HepG2 (cell line): ENCODE measurements at regions of chr3 and their contacts with region 1.

Region 1: GRCh38 chr3:149609595-149609994 is 48.2 kb downstream of the WWTR1 start:
- DNase-seq: peak; percentile 95
- ATAC-seq: peak; percentile 85
- H3K4me3 ChIP-seq: peak overlapping the region in 1 of 3 experiments; percentile 30; a peak in 1 of 6 replicates
- H3K27ac ChIP-seq: peak overlapping the region; percentile 89
- H3K4me1 ChIP-seq: peaks cover 100% of the 10 kb centered on the region
- H3K27me3 ChIP-seq: no peaks in the 10 kb centered on the region
- CTCF ChIP-seq: no peak
- EP300 ChIP-seq: peak in 1 of 2 experiments; percentile 91; a peak in 2 of 4 replicates
- POLR2A ChIP-seq: no peak
- RAD21 ChIP-seq: no peak

Region 2: GRCh38 chr3:149519912-149520311 is 89.7 kb before region 1 on chr3:
- CTCF ChIA-PET with region 1: no interaction called
- POLR2A ChIA-PET with region 1: no interaction called
- in situ Hi-C with region 1: no loop called
- intact Hi-C with region 1: no loop called
- DNase-seq: no peak
- ATAC-seq: no peak
- H3K4me3 ChIP-seq: no peak overlapping the region
- H3K27ac ChIP-seq: no peak overlapping the region
- H3K4me1 ChIP-seq: no peaks in the 10 kb centered on the region
- H3K27me3 ChIP-seq: no peaks in the 10 kb centered on the region
- CTCF ChIP-seq: no peak
- EP300 ChIP-seq: no peak
- POLR2A ChIP-seq: no peak
- RAD21 ChIP-seq: no peak

Region 3: DNA sequence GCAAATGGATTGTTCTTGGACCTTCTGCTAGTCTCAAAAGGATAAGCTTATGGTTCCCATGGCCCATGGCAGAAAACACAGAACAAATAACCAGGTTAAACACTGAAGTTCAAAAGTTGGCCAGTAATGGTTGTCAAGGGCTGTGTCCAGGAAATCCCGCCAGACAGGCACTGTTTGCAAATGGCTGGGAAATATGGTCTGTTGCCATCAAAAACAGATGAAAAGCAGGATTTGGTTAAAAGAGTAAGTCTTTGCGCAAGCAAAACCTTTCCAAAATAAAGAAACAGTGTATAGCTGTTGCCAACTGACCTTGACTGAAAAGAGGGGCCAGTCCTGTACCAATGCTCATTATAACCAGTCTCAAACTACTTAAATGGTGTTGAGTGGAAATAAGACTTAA is 10.4 kb before region 1 on chr3:
- CTCF ChIA-PET with region 1: no interaction called
- POLR2A ChIA-PET with region 1: interaction called, 19 read pairs
- in situ Hi-C with region 1: no loop called
- intact Hi-C with region 1: no loop called
- DNase-seq: peak; percentile 87
- ATAC-seq: peak; percentile 86
- H3K4me3 ChIP-seq: no peak overlapping the region
- H3K27ac ChIP-seq: peak overlapping the region; percentile 46
- H3K4me1 ChIP-seq: peaks cover 77% of the 10 kb centered on the region
- H3K27me3 ChIP-seq: no peaks in the 10 kb centered on the region
- CTCF ChIP-seq: no peak
- EP300 ChIP-seq: peak in 1 of 2 experiments; percentile 67; a peak in 2 of 4 replicates
- POLR2A ChIP-seq: no peak
- RAD21 ChIP-seq: peak; percentile 28; the same call in 1 of the 2 replicates

Region 4: GRCh38 chr3:149634573-149634972 is 25.0 kb after region 1 on chr3:
- CTCF ChIA-PET with region 1: no interaction called
- POLR2A ChIA-PET with region 1: interaction called, 14 read pairs
- in situ Hi-C with region 1: no loop called
- intact Hi-C with region 1: no loop called
- DNase-seq: peak; percentile 56
- ATAC-seq: peak; percentile 93
- H3K4me3 ChIP-seq: no peak overlapping the region
- H3K27ac ChIP-seq: peak overlapping the region; percentile 34
- H3K4me1 ChIP-seq: peaks cover 100% of the 10 kb centered on the region
- H3K27me3 ChIP-seq: no peaks in the 10 kb centered on the region
- CTCF ChIP-seq: no peak
- EP300 ChIP-seq: no peak
- POLR2A ChIP-seq: no peak
- RAD21 ChIP-seq: no peak

Region 5: GRCh38 chr3:149640976-149641728 is 31.6 kb after region 1 on chr3:
- CTCF ChIA-PET with region 1: no interaction called
- POLR2A ChIA-PET with region 1: interaction called, 12 read pairs
- in situ Hi-C with region 1: no loop called
- intact Hi-C with region 1: loop called (anchors 5 kb)
- DNase-seq: peak; percentile 64
- ATAC-seq: peak; percentile 85
- H3K4me3 ChIP-seq: peak overlapping the region in 1 of 3 experiments; percentile 31; a peak in 1 of 6 replicates
- H3K27ac ChIP-seq: peak overlapping the region; percentile 86
- H3K4me1 ChIP-seq: peaks cover 98% of the 10 kb centered on the region
- H3K27me3 ChIP-seq: no peaks in the 10 kb centered on the region
- CTCF ChIP-seq: no peak
- EP300 ChIP-seq: no peak
- POLR2A ChIP-seq: no peak
- RAD21 ChIP-seq: no peak

Region 6: DNA sequence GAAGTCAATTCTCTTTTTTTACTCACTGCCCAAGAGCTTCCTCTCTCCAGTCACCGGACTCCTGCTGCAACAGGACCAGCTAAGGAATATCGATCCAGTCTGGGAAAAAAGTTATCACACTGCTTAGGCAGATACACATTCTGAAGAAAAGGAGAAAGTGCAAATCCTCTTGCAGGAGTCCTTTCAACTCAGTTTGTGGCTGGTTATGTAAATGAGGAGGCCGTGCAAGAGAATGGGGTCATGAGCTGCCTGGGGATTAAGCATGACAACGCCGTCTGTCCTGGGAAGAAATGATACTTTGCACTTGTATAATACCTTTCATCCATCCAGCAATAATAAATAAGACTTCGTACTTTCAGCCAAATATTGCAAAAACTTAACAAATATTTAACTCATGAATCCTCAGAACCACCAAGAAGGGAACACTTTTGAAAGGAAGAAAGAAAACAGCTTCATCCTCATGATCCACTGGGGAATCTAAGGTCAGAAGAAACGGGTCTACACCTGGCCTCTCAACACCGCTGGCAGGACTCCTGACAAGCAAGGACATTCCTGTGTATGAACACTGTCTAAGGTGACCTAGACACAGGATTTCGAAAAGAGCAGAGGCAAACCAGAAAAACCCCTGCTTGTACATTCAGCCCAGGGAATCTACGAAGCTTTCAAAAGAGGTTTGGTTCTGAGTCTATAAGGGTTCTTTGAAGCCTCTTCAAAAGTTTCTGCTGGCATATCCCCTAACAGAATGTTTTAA is 61.3 kb after region 1 on chr3:
- CTCF ChIA-PET with region 1: no interaction called
- POLR2A ChIA-PET with region 1: interaction called, 10 read pairs
- in situ Hi-C with region 1: no loop called
- intact Hi-C with region 1: no loop called
- DNase-seq: peak; percentile 47
- ATAC-seq: peak; percentile 79
- H3K4me3 ChIP-seq: peak overlapping the region; percentile 64 to 71 (median 65)
- H3K27ac ChIP-seq: peak overlapping the region; percentile 52
- H3K4me1 ChIP-seq: peaks cover 25% of the 10 kb centered on the region
- H3K27me3 ChIP-seq: no peaks in the 10 kb centered on the region
- CTCF ChIP-seq: 0 out of 2 replicates have a peak, but pooled peaks have one; percentile 4
- EP300 ChIP-seq: peak in 1 of 2 experiments; percentile 42; a peak in 1 of 4 replicates
- POLR2A ChIP-seq: no peak
- RAD21 ChIP-seq: no peak